ENCODE measurements at regions of chr17 and their contacts with region 1.

Region 1: DNA sequence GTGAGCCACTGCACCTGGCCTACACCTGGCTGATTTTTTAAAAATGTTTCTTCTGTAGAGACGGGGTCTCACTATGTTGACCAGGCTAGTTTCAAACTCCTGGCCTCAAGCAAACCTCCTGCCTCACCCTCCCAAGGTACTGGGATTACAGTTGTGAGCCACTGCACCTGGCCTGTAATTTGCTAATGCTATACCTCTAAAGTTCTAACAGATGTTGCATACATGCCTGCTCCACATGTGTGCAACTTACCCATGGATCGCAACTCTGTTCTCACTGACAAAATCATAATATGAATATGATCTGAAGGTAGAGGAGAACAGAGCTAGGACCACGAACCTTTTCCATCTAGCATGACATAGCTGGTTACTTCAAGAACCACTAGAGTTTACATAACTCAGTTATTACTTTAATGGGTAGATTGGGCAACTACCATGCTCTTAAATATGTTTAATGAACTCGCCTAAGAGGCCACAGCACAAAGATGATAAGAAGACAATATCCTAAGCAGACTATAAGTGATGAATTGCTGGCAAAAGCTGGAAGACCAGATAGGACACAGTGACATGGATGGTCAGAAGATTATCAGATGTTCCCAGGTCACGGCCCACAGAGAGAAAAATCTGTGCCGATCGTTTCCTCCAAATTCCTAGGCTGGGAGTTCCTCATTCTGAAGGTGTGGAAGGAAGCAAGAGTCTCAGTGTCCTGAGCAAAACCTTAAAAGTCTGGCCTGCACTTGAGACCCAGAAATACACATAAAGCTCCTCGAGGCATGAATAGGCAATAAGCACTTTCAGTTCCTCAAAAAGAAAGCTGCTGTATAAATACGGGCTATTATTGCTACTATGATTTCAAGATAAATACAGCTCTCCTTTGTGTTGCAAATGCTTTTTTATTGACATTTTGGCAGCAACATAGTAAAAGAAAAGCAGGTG is 53.6 kb upstream of the ICAM2 start:
- DNase-seq: no peak
- ATAC-seq: peak; percentile 54 to 59
- H3K4me3 ChIP-seq: no peak overlapping the region; the same call in 2 of the 3 replicates
- H3K27ac ChIP-seq: peak overlapping the region; percentile 89 to 90
- H3K4me1 ChIP-seq: peaks cover 39% of the 10 kb centered on the region
- CTCF ChIP-seq: no peak
- EP300 ChIP-seq: no peak
- POLR2A ChIP-seq: no peak
- RAD21 ChIP-seq: no peak

Region 2: DNA sequence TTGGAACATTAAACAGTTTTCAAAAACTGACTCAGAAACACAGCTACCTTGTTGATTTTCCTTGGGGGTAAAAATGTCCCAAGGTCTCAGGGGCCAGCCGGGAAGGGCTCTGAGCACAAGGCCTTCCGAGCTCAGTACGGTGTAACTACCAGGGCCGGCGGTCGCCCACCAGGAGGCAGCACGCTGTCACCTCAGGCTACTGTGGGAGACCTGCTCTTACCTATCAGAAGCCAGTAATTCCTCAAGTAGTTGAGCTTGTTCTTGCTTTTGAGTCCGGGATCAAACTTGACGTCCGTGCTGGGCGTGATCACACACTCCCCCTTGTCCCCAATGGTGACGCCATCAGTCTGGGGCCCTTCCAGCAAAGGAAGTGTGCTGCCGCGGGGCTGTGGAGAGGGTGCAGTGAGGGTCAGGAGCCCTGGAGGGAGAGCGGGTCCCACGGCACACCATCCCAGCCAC is 10.2 kb before region 1 on chr17:
- CTCF ChIA-PET with region 1: interaction called, 49 read pairs
- POLR2A ChIA-PET with region 1: no interaction called
- DNase-seq: peak; percentile 53 to 68
- ATAC-seq: peak; percentile 75 to 97
- H3K4me3 ChIP-seq: no peak overlapping the region
- H3K27ac ChIP-seq: peak overlapping the region in 1 of 2 experiments; percentile 31; a peak in 1 of 6 replicates
- H3K4me1 ChIP-seq: peaks cover 14% of the 10 kb centered on the region
- CTCF ChIP-seq: peak; percentile 54
- EP300 ChIP-seq: no peak
- POLR2A ChIP-seq: no peak
- RAD21 ChIP-seq: peak; percentile 73 to 79

Region 3: GRCh38 chr17:64115871-64116534 is 42.0 kb after region 1 on chr17:
- CTCF ChIA-PET with region 1: interaction called, 10 read pairs
- POLR2A ChIA-PET with region 1: interaction called, 7 read pairs
- DNase-seq: peak; percentile 30 to 34
- ATAC-seq: peak; percentile 53 to 69; a peak in 5 of 6 replicates
- H3K4me3 ChIP-seq: no peak overlapping the region
- H3K27ac ChIP-seq: peak overlapping the region; percentile 19 to 47; a peak in 4 of 6 replicates
- H3K4me1 ChIP-seq: peaks cover 49% of the 10 kb centered on the region
- CTCF ChIP-seq: no peak
- EP300 ChIP-seq: peak; percentile 27 to 31; a peak in 2 of 5 replicates
- POLR2A ChIP-seq: no peak
- RAD21 ChIP-seq: no peak

Region 4: DNA sequence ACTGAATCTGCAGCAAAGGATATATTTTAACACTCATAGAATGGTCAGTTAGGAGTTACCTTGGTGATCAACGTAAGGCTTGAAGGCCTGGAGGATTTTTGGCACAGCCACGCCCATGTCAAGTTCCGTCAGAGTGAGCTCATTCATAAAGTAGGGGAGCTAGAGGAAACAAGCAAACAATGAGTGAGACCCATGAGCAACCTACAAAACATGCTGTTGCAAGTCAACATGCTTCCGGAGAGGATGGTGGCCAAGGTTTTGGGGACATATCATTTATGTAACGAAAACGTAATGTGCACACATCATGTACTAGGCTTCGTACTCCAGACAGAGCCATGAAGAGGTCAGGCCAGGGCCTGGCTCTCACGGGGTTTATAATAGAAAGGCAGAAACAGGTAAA is 97.0 kb after region 1 on chr17:
- CTCF ChIA-PET with region 1: no interaction called
- POLR2A ChIA-PET with region 1: no interaction called
- DNase-seq: peak in 1 of 2 experiments; percentile 16
- ATAC-seq: no peak
- H3K4me3 ChIP-seq: no peak overlapping the region
- H3K27ac ChIP-seq: no peak overlapping the region
- H3K4me1 ChIP-seq: no peaks in the 10 kb centered on the region
- CTCF ChIP-seq: no peak
- EP300 ChIP-seq: no peak
- POLR2A ChIP-seq: no peak
- RAD21 ChIP-seq: no peak

Region 5: GRCh38 chr17:64202675-64203344 is 128.8 kb after region 1 on chr17:
- CTCF ChIA-PET with region 1: no interaction called
- POLR2A ChIA-PET with region 1: no interaction called
- DNase-seq: no peak
- ATAC-seq: 0 out of 6 replicates have a peak, but pooled peaks have one; percentile 23 to 31
- H3K4me3 ChIP-seq: no peak overlapping the region
- H3K27ac ChIP-seq: no peak overlapping the region
- H3K4me1 ChIP-seq: peaks cover 11% of the 10 kb centered on the region; the same call in 2 of the 3 replicates
- CTCF ChIP-seq: no peak
- EP300 ChIP-seq: no peak
- POLR2A ChIP-seq: no peak
- RAD21 ChIP-seq: no peak

Measured in A549 (cell line).